GM10248 (cell line): ENCODE measurements at regions of chr1 and their contacts with region 1.

Region 1: DNA sequence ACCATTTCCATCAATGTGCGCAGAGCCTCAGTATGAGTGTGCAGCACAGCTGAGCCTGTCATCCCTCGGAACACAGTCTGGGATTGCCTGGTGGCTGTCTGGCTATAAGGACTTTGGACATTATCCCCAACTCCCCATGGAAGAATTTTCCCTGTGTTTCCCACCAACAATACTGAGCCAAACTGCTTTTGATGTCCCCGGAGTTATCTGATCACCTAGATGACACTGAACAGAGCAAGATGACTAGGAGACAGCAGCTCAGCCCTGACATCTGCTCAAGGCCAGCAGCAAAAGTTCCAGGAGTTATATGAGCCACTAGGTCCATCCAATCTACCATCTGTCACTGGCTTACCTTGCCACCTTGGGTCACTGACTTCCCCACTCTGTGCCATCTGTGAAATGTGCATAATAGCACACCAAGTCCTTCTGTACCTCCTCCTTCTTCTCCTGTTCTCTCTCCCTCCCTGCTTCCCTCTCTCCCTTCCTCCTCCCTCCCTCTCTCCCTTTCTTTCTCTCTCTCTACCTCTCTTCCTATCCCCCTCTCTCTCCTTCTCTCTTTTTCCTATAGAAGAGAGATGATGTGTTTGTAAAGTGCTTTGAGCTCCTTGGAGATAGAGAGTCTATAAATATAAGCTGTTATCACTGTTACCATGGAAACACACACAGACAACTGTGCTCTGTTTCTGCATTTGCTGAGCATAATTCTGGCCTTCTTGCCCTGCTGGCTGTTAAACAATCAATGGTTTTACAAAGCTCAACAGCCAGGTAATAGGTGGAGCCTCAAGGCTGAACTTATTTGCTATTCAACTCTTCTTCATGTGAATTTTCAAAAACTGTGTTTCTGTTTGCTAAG is 19.7 kb upstream of the ATP1B1 start:
- DNase-seq: no peak
- CTCF ChIP-seq: no peak

Region 2: GRCh38 chr1:169060906-169061639 is 25.8 kb before region 1 on chr1:
- CTCF ChIA-PET with region 1: no interaction called
- POLR2A ChIA-PET with region 1: no interaction called
- DNase-seq: no peak
- CTCF ChIP-seq: no peak

Region 3: GRCh38 chr1:169102567-169102966 is 15.7 kb after region 1 on chr1:
- CTCF ChIA-PET with region 1: interaction called, 11 read pairs
- POLR2A ChIA-PET with region 1: interaction called, 5 read pairs
- DNase-seq: no peak
- CTCF ChIP-seq: no peak

Region 4: GRCh38 chr1:169119405-169119804 is 32.6 kb after region 1 on chr1:
- CTCF ChIA-PET with region 1: no interaction called
- POLR2A ChIA-PET with region 1: no interaction called
- DNase-seq: no peak
- CTCF ChIP-seq: no peak